ENCODE measurements at regions of chr12 and their contacts with region 1.

Region 1: DNA sequence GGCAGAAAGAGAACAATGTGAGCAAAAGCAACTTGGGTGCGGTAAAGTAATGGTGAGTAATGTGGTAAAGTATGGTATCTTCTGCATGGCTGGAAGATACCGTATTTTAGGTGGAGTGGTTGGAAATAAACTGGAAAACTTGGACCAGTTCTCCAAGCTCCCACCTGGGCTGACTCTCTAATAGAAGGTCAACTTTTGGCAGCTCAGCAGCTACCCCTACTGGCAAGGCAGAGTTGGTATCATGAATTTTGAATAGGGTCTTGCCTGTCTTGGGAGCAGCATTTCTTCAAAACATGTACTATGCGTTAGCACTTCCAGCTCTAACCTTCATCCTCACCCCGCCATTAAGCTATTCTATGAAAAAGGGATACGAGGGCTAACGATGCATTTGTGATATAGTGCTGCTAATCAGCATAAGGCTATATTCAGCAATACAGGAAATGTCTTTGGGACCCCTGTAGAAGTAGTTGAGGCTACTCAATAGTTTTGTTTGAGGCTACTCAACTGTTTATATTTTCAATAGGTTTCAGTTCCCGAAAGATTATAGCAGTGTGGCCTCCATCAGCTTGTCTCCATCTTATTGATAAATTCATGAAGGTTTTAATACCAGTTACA is 276.3 kb upstream of the FAR2 start:
- DNase-seq: peak; percentile 79
- H3K4me3 Mint-ChIP-seq: no peak overlapping the region
- H3K27ac Mint-ChIP-seq: no peak overlapping the region
- H3K4me1 Mint-ChIP-seq: peaks cover 11% of the 10 kb centered on the region
- H3K27me3 Mint-ChIP-seq: peaks cover 8% of the 10 kb centered on the region
- CTCF ChIP-seq: peak; percentile 75

Region 2: GRCh38 chr12:27969624-27970400 is 902.9 kb before region 1 on chr12:
- CTCF ChIA-PET with region 1: interaction called, 6 read pairs
- intact Hi-C with region 1: loop called (anchors 5 kb)
- DNase-seq: peak; percentile 78
- H3K4me3 Mint-ChIP-seq: peak overlapping the region; percentile 74
- H3K27ac Mint-ChIP-seq: peak overlapping the region; percentile 38
- H3K4me1 Mint-ChIP-seq: peaks cover 13% of the 10 kb centered on the region
- H3K27me3 Mint-ChIP-seq: peaks cover 33% of the 10 kb centered on the region
- CTCF ChIP-seq: no peak

Region 3: DNA sequence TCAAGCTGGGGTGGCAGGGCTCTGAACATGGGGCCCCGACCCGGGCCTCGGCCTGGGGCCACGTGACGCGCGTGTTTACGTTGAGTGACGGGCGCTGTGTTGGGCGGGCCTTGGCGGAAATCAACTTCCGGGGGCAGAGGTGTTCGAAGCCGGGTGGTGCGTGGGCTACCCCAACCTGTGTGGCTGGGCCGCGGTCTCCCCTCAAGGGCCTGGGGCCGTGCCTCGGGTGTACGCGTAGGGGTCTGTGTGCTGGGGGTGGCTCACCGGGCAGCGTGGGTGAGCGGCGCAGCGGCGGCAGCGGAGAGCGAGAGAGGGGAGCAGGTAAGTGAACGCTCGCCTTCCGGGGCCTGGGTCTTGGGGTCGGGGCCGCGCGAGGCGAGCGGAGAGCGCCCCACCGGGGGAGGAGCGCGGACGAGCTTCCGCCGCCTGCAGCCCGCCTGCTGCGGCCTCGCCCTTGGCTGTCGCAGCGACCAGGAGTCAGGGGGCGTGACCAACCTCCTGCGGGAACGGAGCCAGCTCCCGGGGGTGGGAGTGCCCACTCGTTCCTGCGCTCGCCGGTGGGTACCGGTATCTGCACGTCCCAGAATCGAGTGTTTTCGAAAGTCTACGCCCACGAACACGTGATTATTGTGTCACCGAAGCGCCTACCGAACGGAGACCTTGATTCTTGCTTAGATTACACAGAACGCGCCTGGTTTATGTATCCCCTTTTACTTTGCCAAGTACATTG is 682.3 kb before region 1 on chr12 and contains the start of gene CCDC91:
- CTCF ChIA-PET with region 1: no interaction called
- intact Hi-C with region 1: loop called (anchors 5 kb)
- DNase-seq: peak; percentile 90
- H3K4me3 Mint-ChIP-seq: peak within 1 kb of the TSS; percentile 99
- H3K27ac Mint-ChIP-seq: peak within 1 kb of the TSS; percentile 100
- H3K4me1 Mint-ChIP-seq: peaks cover 14% of the 10 kb centered on the region
- H3K27me3 Mint-ChIP-seq: no peaks in the 10 kb centered on the region
- CTCF ChIP-seq: no peak
- total RNA-seq, gene CCDC91: 25.6 and 30.9 TPM in 2 replicates

Region 4: DNA sequence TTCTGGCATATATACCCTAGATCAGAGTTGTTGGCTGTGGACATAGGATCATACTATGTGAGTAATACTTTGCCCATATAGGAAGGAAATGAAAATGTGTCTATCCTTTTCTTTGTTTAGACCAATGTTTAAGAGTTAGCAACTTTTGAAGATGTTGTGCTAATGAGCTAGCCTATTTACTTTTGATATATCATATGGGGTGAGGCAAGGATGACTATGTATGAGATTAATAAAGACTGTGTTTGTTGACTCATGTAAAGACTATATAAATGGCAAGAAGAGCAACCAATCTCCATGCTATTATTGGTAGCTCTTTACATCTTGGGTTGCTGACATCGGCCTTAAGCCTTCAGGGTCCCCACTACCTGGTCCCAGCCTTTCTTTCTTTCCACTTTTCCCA is 393.1 kb before region 1 on chr12:
- CTCF ChIA-PET with region 1: no interaction called
- intact Hi-C with region 1: loop called (anchors 10 kb)
- DNase-seq: no peak
- H3K4me3 Mint-ChIP-seq: no peak overlapping the region
- H3K27ac Mint-ChIP-seq: no peak overlapping the region
- H3K4me1 Mint-ChIP-seq: no peaks in the 10 kb centered on the region
- H3K27me3 Mint-ChIP-seq: no peaks in the 10 kb centered on the region
- CTCF ChIP-seq: no peak

Region 5: DNA sequence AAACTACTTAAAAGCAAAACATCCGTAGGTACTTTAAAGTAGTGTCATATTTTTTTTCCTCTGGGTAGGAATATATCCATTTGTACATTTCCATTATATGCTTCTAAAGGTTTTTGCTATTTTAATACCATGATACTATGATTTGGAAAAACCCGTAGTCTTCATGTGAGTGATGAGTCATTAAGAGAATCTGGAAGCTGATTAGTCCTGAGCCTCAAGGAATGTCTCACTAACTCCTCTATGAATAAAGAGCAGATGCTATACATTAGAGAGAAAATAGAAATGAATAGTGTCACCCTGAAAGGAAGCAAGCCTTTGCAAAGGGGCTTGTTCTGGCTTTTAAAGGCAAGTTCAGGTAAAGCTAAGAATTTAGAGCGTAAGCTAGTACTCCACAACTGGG is 250.4 kb before region 1 on chr12:
- CTCF ChIA-PET with region 1: no interaction called
- intact Hi-C with region 1: no loop called
- DNase-seq: no peak
- H3K4me3 Mint-ChIP-seq: no peak overlapping the region
- H3K27ac Mint-ChIP-seq: no peak overlapping the region
- H3K4me1 Mint-ChIP-seq: no peaks in the 10 kb centered on the region
- H3K27me3 Mint-ChIP-seq: no peaks in the 10 kb centered on the region
- CTCF ChIP-seq: no peak

Region 6: DNA sequence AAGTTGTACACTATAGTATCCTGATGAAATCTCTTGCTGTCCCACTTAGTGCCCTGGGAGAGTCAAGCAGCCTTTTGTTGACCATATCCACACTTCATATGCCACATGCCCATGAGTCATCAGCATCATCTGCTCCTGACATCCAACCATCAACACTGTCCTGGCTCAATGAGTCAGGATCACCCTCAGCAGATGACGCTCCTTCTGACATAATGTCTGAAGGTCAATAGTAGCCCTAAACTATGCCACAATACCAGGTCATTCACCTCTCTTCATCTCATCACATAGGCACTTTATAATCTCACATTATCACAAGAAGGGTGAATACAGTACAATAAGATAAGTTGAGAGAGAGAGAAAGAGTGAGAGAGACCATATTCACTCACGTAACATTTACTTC is 92.7 kb before region 1 on chr12:
- CTCF ChIA-PET with region 1: no interaction called
- intact Hi-C with region 1: loop called (anchors 10 kb)
- DNase-seq: peak; percentile 7
- H3K4me3 Mint-ChIP-seq: no peak overlapping the region
- H3K27ac Mint-ChIP-seq: peak overlapping the region; percentile 77
- H3K4me1 Mint-ChIP-seq: peaks cover 14% of the 10 kb centered on the region
- H3K27me3 Mint-ChIP-seq: no peaks in the 10 kb centered on the region
- CTCF ChIP-seq: no peak

Region 7: DNA sequence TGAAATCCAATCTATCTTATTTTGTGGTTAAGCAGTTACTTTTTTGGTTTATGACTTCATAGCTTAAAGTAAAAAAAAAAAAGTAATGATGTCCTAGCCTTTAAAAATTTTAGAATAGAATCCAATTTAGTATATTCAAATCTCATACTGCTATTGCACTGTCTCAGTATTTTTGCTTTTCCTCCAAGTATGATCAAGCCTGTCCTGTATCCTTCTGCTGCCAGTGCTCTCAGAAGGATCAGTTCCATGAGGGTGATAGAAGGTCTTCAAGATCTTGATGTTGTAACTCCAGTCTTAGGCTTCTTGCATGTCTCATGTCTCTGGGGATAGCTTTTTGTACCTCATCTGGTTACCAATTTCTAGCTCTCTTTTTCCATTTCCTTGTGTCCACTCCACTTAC is 47.9 kb before region 1 on chr12:
- CTCF ChIA-PET with region 1: no interaction called
- intact Hi-C with region 1: loop called (anchors 10 kb)
- DNase-seq: no peak
- H3K4me3 Mint-ChIP-seq: no peak overlapping the region
- H3K27ac Mint-ChIP-seq: no peak overlapping the region
- H3K4me1 Mint-ChIP-seq: peaks cover 13% of the 10 kb centered on the region
- H3K27me3 Mint-ChIP-seq: no peaks in the 10 kb centered on the region
- CTCF ChIP-seq: no peak